Astrocyte of the cerebellum (primary cell): ENCODE measurements at regions of chr12 and their contacts with region 1.

Region 1: GRCh38 chr12:114425031-114425626 is 19.2 kb upstream of the TBX5 start:
- DNase-seq: no peak
- H3K4me3 ChIP-seq: no peak overlapping the region
- CTCF ChIP-seq: no peak

Region 2: DNA sequence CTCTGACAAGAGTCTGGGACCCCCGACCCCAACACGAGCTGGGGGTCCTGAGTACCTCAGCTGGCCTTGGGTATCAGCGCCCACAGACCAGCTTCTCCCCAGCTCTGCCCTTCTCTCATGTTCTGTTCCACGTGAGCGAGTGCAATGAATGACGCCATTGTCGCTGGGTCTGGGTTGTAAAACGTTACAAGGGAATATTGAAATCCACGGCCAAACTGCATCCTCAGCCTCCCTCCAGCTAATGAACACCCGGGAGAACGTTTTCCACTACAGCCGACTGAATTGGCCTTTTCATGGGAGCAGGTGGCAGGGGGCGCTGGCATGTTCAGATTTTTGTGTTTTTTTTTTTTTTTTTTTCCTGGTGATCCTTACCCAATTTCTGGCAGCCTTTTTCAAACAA is 53.9 kb before region 1 on chr12:
- in situ Hi-C with region 1: loop called (anchors 5 kb)
- DNase-seq: no peak
- H3K4me3 ChIP-seq: no peak overlapping the region
- CTCF ChIP-seq: no peak

Region 3: DNA sequence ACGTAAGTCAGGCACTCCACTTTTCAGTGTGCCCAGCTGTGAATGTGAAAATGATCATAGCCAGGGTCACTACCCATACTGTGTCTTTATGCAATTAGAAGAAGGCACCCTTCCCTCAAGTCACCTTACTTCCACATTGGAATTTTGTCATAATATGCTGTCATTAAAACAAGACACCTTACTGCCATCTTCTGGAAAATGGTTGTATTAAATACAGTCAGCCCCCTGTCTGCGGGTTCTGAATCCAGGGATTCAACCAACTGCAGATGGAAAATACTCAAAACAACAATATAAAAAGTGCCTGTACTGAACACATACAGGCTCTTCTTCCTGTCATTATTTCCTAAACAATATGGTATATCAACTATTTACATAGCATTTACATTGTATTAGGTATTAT is 51.0 kb after region 1 on chr12:
- in situ Hi-C with region 1: loop called (anchors 10 kb)
- DNase-seq: no peak
- H3K4me3 ChIP-seq: no peak overlapping the region
- CTCF ChIP-seq: no peak

Region 4: GRCh38 chr12:114520236-114520635 is 95.1 kb after region 1 on chr12:
- in situ Hi-C with region 1: loop called (anchors 5 kb)
- DNase-seq: no peak
- H3K4me3 ChIP-seq: no peak overlapping the region
- CTCF ChIP-seq: no peak

Region 5: DNA sequence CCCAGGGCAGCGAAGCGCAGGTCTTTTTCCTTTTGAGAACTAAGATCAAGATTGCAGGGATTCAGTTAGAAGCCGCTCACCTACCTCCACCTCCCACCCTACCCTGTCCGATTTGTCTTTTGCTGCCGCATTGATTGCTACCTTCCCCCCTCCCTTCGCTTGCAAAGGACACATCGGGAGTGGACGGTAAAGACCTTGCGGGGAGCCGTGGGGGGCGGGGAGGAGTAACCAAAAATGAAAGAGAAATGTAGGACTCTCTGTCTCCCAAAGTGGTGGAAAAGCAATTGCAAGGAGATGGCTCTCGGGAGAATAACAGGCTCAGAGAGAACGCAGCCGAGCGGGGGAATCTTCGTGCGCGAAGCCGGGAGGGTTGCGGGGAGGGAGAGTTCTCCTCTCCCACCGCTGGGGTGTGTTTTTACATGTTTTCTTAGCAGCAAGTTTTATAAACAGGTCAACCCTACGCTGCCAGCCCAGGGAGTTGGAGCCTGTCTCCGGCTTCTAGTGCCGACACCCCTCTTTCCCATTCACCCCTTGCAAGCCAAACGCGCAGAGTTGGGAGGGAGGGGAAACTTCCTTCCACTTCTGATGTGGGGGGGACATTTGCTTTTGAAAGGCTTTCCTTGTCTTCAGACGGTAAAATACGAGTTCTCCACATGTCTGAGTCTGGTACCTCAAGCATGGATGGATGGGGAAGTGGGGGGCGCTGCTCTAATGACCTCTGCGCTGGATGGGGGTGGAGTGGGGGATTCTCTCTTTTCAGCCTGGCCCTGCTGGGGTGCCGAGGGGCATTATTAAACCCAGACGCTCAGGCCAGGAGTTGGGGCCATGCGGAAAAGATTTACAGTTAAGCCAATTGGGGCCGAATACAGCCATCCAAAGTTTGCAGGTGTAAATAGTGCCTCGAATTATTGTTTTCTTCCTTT is 267.7 kb after region 1 on chr12:
- in situ Hi-C with region 1: no loop called
- DNase-seq: no peak
- H3K4me3 ChIP-seq: peak overlapping the region; percentile 37
- CTCF ChIP-seq: no peak

Region 6: GRCh38 chr12:114777052-114777451 is 351.9 kb after region 1 on chr12:
- in situ Hi-C with region 1: no loop called
- DNase-seq: peak; percentile 57
- H3K4me3 ChIP-seq: no peak overlapping the region
- CTCF ChIP-seq: no peak